MCF 10A (cell line): ENCODE measurements at regions of chr5 and their contacts with region 1.

Region 1: GRCh38 chr5:163347671-163348070 is 89.7 kb upstream of the CCNG1 start:
- DNase-seq: peak; percentile 88
- H3K4me3 Mint-ChIP-seq: no peak overlapping the region
- H3K27ac Mint-ChIP-seq: no peak overlapping the region
- H3K4me1 Mint-ChIP-seq: no peaks in the 10 kb centered on the region
- H3K27me3 Mint-ChIP-seq: peaks cover 26% of the 10 kb centered on the region
- CTCF ChIP-seq: peak; percentile 92

Region 2: DNA sequence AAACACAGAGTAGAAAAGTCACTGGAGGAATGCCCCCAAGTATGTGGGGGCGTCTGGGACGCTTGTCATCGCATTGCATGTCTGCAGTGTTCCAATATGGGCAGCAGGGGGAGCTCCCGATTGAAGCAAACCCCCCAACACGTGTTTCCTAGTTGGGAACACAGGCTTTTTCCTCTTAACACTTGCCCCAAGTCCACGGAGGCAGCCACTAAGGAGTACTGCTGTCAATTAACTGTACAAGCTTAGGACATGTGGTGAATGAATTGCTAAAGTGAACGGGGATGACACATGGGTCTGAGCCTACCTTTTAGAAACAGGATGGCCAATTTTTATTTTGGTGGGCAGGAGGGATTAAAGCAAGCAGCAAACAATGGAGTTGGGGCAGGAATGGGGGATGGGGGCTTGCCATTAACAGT is 1803.3 kb before region 1 on chr5:
- CTCF ChIA-PET with region 1: interaction called, 35 read pairs
- POLR2A ChIA-PET with region 1: no interaction called
- intact Hi-C with region 1: loop called (anchors 1 kb)
- DNase-seq: peak; percentile 72
- H3K4me3 Mint-ChIP-seq: no peak overlapping the region
- H3K27ac Mint-ChIP-seq: no peak overlapping the region
- H3K4me1 Mint-ChIP-seq: peaks cover 11% of the 10 kb centered on the region
- H3K27me3 Mint-ChIP-seq: peaks cover 93% of the 10 kb centered on the region
- CTCF ChIP-seq: peak; percentile 97

Region 3: DNA sequence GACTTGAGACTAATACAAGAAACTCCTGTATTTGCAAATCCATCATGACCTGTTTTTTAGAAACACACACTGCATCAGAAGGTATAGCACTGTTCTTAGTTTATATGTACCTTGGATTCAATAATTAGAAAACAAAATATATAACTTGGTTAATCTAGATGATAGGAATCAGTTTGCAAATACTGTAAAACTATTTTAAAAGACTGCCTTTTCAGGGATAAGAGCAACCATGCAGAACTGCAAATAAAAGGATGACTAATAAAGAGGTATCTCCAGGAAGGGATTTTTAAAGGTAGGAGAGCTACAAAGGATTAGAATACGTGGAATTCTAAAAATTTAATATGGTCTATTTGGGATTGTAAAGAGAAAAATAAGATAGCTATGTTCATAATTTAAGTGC is 1490.4 kb before region 1 on chr5:
- CTCF ChIA-PET with region 1: interaction called, 62 read pairs
- POLR2A ChIA-PET with region 1: no interaction called
- intact Hi-C with region 1: no loop called
- DNase-seq: no peak
- H3K4me3 Mint-ChIP-seq: no peak overlapping the region
- H3K27ac Mint-ChIP-seq: no peak overlapping the region
- H3K4me1 Mint-ChIP-seq: no peaks in the 10 kb centered on the region
- H3K27me3 Mint-ChIP-seq: peaks cover 75% of the 10 kb centered on the region
- CTCF ChIP-seq: no peak

Region 4: GRCh38 chr5:162703914-162704313 is 643.8 kb before region 1 on chr5:
- CTCF ChIA-PET with region 1: interaction called, 4 read pairs
- POLR2A ChIA-PET with region 1: no interaction called
- intact Hi-C with region 1: loop called (anchors 2 kb)
- DNase-seq: peak; percentile 32
- H3K4me3 Mint-ChIP-seq: no peak overlapping the region
- H3K27ac Mint-ChIP-seq: no peak overlapping the region
- H3K4me1 Mint-ChIP-seq: peaks cover 5% of the 10 kb centered on the region
- H3K27me3 Mint-ChIP-seq: peaks cover 36% of the 10 kb centered on the region
- CTCF ChIP-seq: no peak

Region 5: DNA sequence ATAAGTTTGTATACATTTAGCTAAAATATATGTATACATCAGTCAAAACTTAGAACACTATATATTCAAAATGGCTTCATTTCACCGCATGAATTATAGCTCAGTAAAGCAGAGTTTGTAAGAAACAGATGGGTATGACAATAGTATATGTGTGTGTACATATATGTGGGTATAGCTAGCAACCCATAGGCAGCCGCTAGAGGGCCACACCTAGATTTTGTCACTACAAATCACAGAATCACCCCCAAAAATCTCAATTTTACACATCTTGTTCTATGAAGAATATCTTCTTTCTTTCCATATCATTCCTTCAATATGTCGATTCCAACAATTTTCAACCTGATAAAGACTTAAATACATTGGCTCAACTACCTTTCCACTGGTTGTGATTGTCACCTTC is 268.1 kb before region 1 on chr5:
- CTCF ChIA-PET with region 1: interaction called, 8 read pairs
- POLR2A ChIA-PET with region 1: no interaction called
- intact Hi-C with region 1: loop called (anchors 2 kb)
- DNase-seq: peak; percentile 31
- H3K4me3 Mint-ChIP-seq: no peak overlapping the region
- H3K27ac Mint-ChIP-seq: no peak overlapping the region
- H3K4me1 Mint-ChIP-seq: no peaks in the 10 kb centered on the region
- H3K27me3 Mint-ChIP-seq: no peaks in the 10 kb centered on the region
- CTCF ChIP-seq: peak; percentile 64